GM12878 (cell line): ENCODE measurements at regions of chr2 and their contacts with region 1.

Region 1: DNA sequence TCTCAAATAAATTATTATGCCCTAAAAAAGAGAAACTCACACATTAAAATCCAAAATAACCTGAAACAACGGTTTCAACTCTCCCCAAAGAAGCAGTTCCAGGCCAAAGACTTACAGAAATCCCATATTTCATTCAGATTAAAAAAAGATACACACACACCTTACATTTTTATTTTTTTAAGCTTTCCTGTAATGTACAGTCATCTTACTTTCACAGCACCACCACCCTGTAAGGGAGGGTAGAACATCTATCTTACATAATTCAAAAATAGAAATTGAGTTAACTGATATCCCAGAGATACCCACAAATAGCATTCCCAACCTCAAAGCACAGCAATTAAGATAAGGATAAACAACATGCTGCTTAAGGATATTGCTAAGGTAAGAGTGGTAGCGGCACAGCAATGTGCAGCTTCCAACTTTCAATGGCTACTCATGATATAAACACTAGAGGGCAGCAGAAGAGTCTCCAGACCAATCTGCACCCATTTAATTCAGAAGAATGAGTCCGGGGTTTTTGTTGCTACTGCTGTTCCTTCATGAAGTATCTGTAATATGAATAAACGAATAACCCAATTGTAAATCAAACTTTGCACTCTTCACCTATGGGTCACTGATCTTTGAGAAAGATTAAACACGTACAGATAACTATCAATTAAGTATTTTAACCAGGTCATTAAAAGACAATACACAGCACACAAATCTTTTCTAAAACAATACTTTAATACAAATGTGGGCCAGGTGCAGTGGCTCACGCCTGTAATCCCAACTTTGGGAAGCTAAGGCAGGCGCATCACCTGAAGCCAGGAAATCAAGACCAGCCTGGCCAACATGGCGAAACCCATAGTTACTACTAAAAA is 11.3 kb downstream of the GFPT1 start:
- DNase-seq: no peak
- ATAC-seq: peak; percentile 90
- H3K4me3 ChIP-seq: no peak overlapping the region
- H3K27ac ChIP-seq: no peak overlapping the region
- H3K4me1 ChIP-seq: no peaks in the 10 kb centered on the region
- H3K27me3 ChIP-seq: no peaks in the 10 kb centered on the region
- CTCF ChIP-seq: peak; percentile 49 to 63 (median 62); a peak in 5 of 6 replicates
- EP300 ChIP-seq: no peak
- POLR2A ChIP-seq: no peak
- RAD21 ChIP-seq: peak; percentile 61

Region 2: GRCh38 chr2:69149631-69150215 is 226.0 kb before region 1 on chr2:
- CTCF ChIA-PET with region 1: no interaction called
- POLR2A ChIA-PET with region 1: no interaction called
- RAD21 ChIA-PET with region 1: no interaction called
- SMC1A ChIA-PET with region 1: no interaction called
- in situ Hi-C with region 1: no loop called
- intact Hi-C with region 1: no loop called
- DNase-seq: no peak
- ATAC-seq: no peak
- H3K4me3 ChIP-seq: no peak overlapping the region
- H3K27ac ChIP-seq: no peak overlapping the region
- H3K4me1 ChIP-seq: no peaks in the 10 kb centered on the region
- H3K27me3 ChIP-seq: peaks cover 0 to 2% of the 10 kb centered on the region in 2 experiments; a peak in 2 of 4 replicates
- CTCF ChIP-seq: no peak
- EP300 ChIP-seq: no peak
- POLR2A ChIP-seq: no peak
- RAD21 ChIP-seq: no peak

Region 3: DNA sequence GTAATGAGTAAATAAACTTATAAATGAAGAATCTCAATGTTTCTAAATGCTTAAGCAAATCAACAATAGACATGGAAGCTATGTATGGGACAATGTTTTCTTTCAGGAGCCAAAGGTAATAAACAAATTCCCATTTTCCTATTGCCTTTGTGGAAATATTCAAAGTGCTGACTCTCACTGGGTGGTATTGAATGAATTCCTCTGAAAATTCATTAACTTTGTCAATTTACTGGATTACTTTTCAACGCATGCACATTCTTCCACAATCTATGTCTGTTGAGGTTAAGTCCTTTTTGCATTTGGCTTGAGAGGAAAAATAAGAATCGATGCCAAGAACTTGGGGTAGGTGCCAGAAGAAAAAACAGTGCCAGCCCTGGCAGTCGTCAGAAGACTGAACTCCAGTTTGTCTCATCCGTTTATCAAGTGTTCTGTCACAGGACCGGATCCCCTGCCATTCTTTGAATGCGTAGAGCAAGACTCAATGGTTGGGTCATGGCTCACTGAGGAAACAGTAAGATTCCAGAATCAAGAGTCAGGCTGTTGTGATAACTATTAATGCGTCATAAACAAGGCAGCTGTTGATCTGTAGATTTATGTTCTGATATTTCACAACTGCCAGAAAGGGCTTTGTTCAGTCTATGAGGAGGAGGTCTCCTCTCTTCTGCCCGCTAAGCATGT is 122.0 kb before region 1 on chr2:
- CTCF ChIA-PET with region 1: no interaction called
- POLR2A ChIA-PET with region 1: no interaction called
- RAD21 ChIA-PET with region 1: no interaction called
- SMC1A ChIA-PET with region 1: no interaction called
- in situ Hi-C with region 1: no loop called
- intact Hi-C with region 1: no loop called
- DNase-seq: no peak
- ATAC-seq: no peak
- H3K4me3 ChIP-seq: no peak overlapping the region
- H3K27ac ChIP-seq: no peak overlapping the region
- H3K4me1 ChIP-seq: no peaks in the 10 kb centered on the region
- H3K27me3 ChIP-seq: peaks cover 0 to 4% of the 10 kb centered on the region in 2 experiments; a peak in 1 of 4 replicates
- CTCF ChIP-seq: no peak
- EP300 ChIP-seq: no peak
- POLR2A ChIP-seq: no peak
- RAD21 ChIP-seq: no peak

Region 4: GRCh38 chr2:69358914-69359313 is 16.8 kb before region 1 on chr2:
- CTCF ChIA-PET with region 1: interaction called, 11 read pairs
- POLR2A ChIA-PET with region 1: interaction called, 3 read pairs
- RAD21 ChIA-PET with region 1: interaction called, 3 read pairs
- SMC1A ChIA-PET with region 1: interaction called, 4 read pairs
- in situ Hi-C with region 1: no loop called
- intact Hi-C with region 1: no loop called
- DNase-seq: no peak
- ATAC-seq: no peak
- H3K4me3 ChIP-seq: no peak overlapping the region
- H3K27ac ChIP-seq: no peak overlapping the region
- H3K4me1 ChIP-seq: no peaks in the 10 kb centered on the region
- H3K27me3 ChIP-seq: no peaks in the 10 kb centered on the region
- CTCF ChIP-seq: no peak
- EP300 ChIP-seq: no peak
- POLR2A ChIP-seq: no peak
- RAD21 ChIP-seq: no peak

Region 5: DNA sequence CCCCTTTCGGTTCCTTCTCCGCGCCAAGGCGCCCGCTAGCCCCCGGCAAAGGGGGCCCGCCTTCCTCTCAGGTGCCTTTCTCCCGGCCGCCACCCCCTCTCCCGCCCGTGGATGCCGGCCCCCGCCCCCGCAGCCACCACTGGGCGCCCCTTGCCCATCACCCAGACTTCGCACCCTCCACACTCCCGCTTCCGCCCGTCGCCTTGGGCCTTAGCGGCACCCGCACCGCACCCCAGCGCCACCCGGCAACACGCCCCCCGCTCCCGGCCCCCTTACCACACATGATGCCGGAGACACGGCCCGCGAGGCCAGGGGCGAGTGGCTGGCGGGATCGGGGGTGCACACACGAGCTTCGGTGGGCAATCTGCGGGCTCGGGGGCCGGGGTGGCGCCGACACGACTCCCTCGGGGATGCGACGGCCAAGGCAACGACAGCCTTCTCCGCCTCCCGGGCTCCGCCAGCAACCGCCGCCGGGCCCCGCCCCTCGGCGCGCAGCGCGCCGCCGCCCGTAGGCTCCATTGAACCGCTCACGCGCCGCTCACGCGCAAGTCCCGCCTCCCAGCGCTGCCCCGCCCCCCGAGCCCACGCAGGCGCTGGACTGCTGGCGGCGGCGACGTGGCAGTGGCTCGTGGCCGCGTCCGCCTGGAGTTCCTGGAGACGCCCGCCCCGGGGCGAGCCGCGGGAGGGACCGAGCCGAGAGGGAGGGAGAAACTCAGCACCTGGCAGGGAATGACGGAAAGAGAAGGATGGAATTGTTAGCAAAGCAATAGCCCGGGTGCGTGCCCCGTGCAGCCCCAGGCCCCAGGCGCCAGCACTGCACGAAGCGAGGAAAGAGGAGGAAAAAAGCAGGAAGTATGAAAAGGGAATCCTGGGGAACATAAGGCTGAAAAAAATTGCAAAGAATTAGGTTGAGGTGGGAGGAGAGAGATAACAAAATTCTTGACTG is 11.3 kb after region 1 on chr2 and contains the start of gene GFPT1:
- CTCF ChIA-PET with region 1: interaction called, 30 read pairs
- POLR2A ChIA-PET with region 1: interaction called, 8 read pairs
- RAD21 ChIA-PET with region 1: interaction called, 11 read pairs
- SMC1A ChIA-PET with region 1: interaction called, 27 read pairs
- in situ Hi-C with region 1: no loop called
- intact Hi-C with region 1: no loop called
- DNase-seq: peak; percentile 54
- ATAC-seq: peak; percentile 93
- H3K4me3 ChIP-seq: peak within 1 kb of the TSS; percentile 88
- H3K27ac ChIP-seq: peak within 1 kb of the TSS; percentile 82
- H3K4me1 ChIP-seq: peaks cover 12% of the 10 kb centered on the region; the same call in 1 of the 2 replicates
- H3K27me3 ChIP-seq: no peaks in the 10 kb centered on the region
- CTCF ChIP-seq: no peak
- EP300 ChIP-seq: no peak
- POLR2A ChIP-seq: peak; percentile 95
- RAD21 ChIP-seq: no peak
- polyA plus RNA-seq, gene GFPT1: 10.1 to 13.0 TPM

Region 6: GRCh38 chr2:69717861-69718273 is 342.1 kb after region 1 on chr2:
- CTCF ChIA-PET with region 1: interaction called, 11 read pairs
- POLR2A ChIA-PET with region 1: no interaction called
- RAD21 ChIA-PET with region 1: interaction called, 12 read pairs
- SMC1A ChIA-PET with region 1: interaction called, 22 read pairs
- in situ Hi-C with region 1: no loop called
- intact Hi-C with region 1: loop called (anchors 5 kb)
- DNase-seq: no peak
- ATAC-seq: peak; percentile 82
- H3K4me3 ChIP-seq: no peak overlapping the region
- H3K27ac ChIP-seq: no peak overlapping the region
- H3K4me1 ChIP-seq: peaks cover 12% of the 10 kb centered on the region; the same call in 1 of the 2 replicates
- H3K27me3 ChIP-seq: no peaks in the 10 kb centered on the region
- CTCF ChIP-seq: no peak
- EP300 ChIP-seq: peak in 1 of 2 experiments; percentile 9; a peak in 1 of 4 replicates
- POLR2A ChIP-seq: no peak
- RAD21 ChIP-seq: no peak